A673 (cell line): ENCODE measurements at regions of chr9 and their contacts with region 1.

Region 1: DNA sequence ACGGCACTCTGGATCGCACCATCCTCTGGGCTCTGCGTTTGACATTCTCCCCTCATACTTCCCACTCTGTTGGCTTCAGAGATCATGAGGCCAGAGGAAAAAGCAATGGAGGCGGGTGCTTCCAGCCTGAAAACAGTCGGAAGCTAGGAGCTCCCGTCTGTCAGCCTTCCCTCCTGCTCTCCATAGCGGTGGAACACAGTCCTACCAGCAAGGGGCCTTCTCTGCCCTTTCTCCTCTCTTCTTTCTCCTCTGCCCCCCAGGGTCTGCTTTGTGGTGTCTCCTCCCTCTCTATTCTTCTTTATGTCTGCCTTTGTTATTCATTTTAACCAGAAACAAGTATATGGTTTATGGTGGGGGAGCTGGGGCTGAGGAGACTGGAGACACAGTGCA is 152.5 kb upstream of the NFIB start:
- DNase-seq: no peak
- H3K4me3 ChIP-seq: no peak overlapping the region
- H3K27ac ChIP-seq: no peak overlapping the region
- H3K4me1 ChIP-seq: peaks cover 6% of the 10 kb centered on the region
- H3K27me3 ChIP-seq: no peaks in the 10 kb centered on the region
- CTCF ChIP-seq: no peak

Region 2: DNA sequence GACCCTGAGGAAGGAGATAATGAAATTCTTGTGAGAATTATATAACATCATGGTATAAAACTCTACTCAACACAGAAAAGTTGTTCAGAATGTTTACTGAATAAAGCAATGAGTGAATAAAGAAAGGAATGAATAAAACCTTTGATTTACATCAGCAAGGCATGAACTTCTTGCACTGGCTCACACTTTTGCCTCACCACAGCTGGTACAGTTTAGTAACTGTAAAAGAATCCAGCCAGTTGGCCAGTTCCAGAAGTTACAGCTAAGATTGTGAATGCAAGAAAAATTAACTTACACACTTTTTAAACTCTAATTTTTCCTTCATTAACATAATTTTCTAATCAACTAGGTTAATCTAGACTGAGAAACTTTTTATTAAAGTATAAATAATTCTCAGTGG is 643.4 kb before region 1 on chr9:
- CTCF ChIA-PET with region 1: no interaction called
- POLR2A ChIA-PET with region 1: no interaction called
- intact Hi-C with region 1: no loop called
- DNase-seq: no peak
- H3K4me3 ChIP-seq: no peak overlapping the region
- H3K27ac ChIP-seq: no peak overlapping the region
- H3K4me1 ChIP-seq: no peaks in the 10 kb centered on the region
- H3K27me3 ChIP-seq: no peaks in the 10 kb centered on the region
- CTCF ChIP-seq: no peak

Region 3: DNA sequence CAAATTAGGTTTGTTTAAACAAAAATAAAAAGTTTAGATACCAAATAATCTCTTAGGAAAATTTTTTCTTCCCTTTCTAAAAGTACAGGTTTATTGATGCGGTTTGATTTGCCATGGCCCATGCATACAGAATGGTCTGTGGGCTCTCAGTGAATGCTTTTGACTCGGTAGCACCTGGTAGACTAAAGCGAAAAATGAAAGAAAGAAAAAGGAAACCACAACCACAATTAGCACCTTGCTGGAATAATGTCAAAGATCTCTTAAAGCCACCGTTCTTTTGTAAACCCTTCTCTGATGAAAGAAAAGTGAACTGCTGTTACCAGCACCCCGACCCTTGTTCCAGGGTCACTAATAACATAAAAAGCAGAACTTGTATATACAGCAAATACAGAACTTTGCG is 310.4 kb before region 1 on chr9:
- CTCF ChIA-PET with region 1: no interaction called
- POLR2A ChIA-PET with region 1: no interaction called
- intact Hi-C with region 1: no loop called
- DNase-seq: no peak
- H3K4me3 ChIP-seq: no peak overlapping the region
- H3K27ac ChIP-seq: no peak overlapping the region
- H3K4me1 ChIP-seq: peaks cover 14% of the 10 kb centered on the region
- H3K27me3 ChIP-seq: no peaks in the 10 kb centered on the region
- CTCF ChIP-seq: no peak

Region 4: DNA sequence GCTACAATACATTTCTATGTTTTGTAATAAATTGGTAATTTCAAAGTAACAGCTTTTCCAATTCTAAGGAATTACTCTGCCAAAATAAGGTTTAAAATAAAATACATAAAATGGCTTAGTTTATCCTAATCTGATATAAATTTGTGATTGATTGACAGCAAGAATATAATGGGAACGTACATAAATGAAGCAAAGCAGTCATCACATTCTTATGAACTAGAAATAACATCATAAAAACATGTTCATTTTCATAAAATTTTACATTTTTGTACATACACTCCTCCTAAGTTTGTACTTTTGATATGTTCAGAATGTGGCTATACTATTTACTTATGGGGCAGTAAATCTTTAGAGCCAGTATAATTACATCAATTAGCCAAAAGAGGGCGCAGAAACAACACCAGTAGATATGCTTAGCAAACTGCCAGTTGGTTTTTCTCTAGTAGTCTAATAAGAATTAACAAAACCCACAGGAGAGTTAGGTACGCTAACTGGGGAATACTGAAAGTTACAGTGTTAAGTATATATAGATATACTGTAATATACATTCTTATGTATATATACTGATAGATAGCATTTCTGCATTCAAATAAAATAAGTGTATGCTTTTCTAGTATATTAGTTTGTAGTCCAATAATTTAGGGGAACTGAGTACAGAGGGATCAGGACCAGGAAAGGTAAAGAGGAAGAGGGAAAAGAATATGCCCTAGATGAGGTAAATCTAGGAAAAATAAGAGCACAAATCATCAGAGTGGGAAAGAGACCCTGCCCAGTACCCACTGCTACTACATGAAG is 150.0 kb after region 1 on chr9:
- CTCF ChIA-PET with region 1: no interaction called
- POLR2A ChIA-PET with region 1: no interaction called
- intact Hi-C with region 1: loop called (anchors 10 kb)
- DNase-seq: peak; percentile 70
- H3K4me3 ChIP-seq: no peak overlapping the region
- H3K27ac ChIP-seq: no peak overlapping the region
- H3K4me1 ChIP-seq: peaks cover 20% of the 10 kb centered on the region
- H3K27me3 ChIP-seq: no peaks in the 10 kb centered on the region
- CTCF ChIP-seq: peak; percentile 69

Region 5: GRCh38 chr9:14652729-14653377 is 186.4 kb after region 1 on chr9:
- CTCF ChIA-PET with region 1: no interaction called
- POLR2A ChIA-PET with region 1: no interaction called
- intact Hi-C with region 1: loop called (anchors 10 kb)
- DNase-seq: peak; percentile 46
- H3K4me3 ChIP-seq: no peak overlapping the region
- H3K27ac ChIP-seq: no peak overlapping the region
- H3K4me1 ChIP-seq: no peaks in the 10 kb centered on the region
- H3K27me3 ChIP-seq: no peaks in the 10 kb centered on the region
- CTCF ChIP-seq: peak; percentile 56